CD8-positive, alpha-beta memory T cell (primary cell): ENCODE measurements at regions of chr5 and their contacts with region 1.

Region 1: DNA sequence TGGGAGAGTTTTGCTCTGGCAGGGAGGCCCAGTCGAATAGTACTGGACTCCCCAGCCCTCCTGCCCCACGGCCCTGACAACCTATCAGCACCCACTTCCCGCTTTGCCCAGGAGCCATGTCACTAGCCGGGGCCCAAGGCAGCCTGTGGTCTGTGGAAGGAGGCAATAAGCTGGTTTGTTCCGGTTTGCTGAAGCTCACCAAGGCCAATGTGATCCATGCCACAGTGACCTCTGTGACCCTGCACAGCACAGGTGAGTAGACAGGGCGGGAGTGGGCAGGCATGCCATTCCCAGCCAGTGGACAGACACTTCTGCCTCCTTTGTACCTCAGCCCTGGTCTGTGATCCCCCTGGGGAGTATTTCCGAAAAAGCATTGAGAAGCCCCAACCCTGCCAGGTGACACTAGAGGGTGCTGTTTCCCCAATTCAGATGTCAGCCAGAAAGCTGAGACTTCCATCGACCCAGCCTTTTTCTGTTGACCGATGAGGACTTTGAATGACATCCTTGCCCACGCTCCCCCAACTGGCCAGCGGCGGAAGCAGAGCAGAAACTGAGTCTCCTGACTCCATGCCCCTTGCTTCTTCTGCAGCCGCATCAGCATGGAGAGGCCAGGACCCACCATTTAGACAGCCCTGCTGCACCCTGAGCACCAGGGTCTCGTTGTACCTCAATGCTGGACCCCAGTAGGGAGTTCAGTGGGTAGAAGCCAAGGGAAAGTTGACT is 9.6 kb downstream of the PCYOX1L start:
- DNase-seq: peak; percentile 13 to 55 (median 22)
- H3K4me3 ChIP-seq: no peak overlapping the region
- H3K4me3 Mint-ChIP-seq: no peak overlapping the region
- H3K27ac ChIP-seq: no peak overlapping the region
- H3K27ac Mint-ChIP-seq: peak overlapping the region in 3 of 8 donors; percentile 21 to 38 (median 33)
- H3K4me1 ChIP-seq: peaks cover 4% of the 10 kb centered on the region
- H3K4me1 Mint-ChIP-seq: peaks cover 11 to 18% (median 16%) of the 10 kb centered on the region in 3 donors
- H3K27me3 ChIP-seq: no peaks in the 10 kb centered on the region
- H3K27me3 Mint-ChIP-seq: no peaks in the 10 kb centered on the region

Region 2: GRCh38 chr5:149099920-149100319 is 267.5 kb before region 1 on chr5:
- CTCF ChIA-PET with region 1: no interaction called
- POLR2A ChIA-PET with region 1: no interaction called
- DNase-seq: no peak
- H3K4me3 ChIP-seq: no peak overlapping the region
- H3K4me3 Mint-ChIP-seq: no peak overlapping the region
- H3K27ac ChIP-seq: no peak overlapping the region
- H3K27ac Mint-ChIP-seq: no peak overlapping the region
- H3K4me1 ChIP-seq: no peaks in the 10 kb centered on the region
- H3K4me1 Mint-ChIP-seq: no peaks in the 10 kb centered on the region
- H3K27me3 ChIP-seq: no peaks in the 10 kb centered on the region
- H3K27me3 Mint-ChIP-seq: peaks cover 10 to 14% of the 10 kb centered on the region in 2 donors

Region 3: GRCh38 chr5:149317281-149318048 is 49.9 kb before region 1 on chr5:
- CTCF ChIA-PET with region 1: interaction called, 221 read pairs
- POLR2A ChIA-PET with region 1: no interaction called
- DNase-seq: peak in 4 of 5 donors; percentile 13 to 52 (median 24)
- H3K4me3 ChIP-seq: no peak overlapping the region
- H3K4me3 Mint-ChIP-seq: no peak overlapping the region
- H3K27ac ChIP-seq: no peak overlapping the region
- H3K27ac Mint-ChIP-seq: no peak overlapping the region
- H3K4me1 ChIP-seq: peaks cover 3% of the 10 kb centered on the region
- H3K4me1 Mint-ChIP-seq: no peaks in the 10 kb centered on the region
- H3K27me3 ChIP-seq: no peaks in the 10 kb centered on the region
- H3K27me3 Mint-ChIP-seq: peaks cover 4 to 5% of the 10 kb centered on the region in 2 donors

Region 4: DNA sequence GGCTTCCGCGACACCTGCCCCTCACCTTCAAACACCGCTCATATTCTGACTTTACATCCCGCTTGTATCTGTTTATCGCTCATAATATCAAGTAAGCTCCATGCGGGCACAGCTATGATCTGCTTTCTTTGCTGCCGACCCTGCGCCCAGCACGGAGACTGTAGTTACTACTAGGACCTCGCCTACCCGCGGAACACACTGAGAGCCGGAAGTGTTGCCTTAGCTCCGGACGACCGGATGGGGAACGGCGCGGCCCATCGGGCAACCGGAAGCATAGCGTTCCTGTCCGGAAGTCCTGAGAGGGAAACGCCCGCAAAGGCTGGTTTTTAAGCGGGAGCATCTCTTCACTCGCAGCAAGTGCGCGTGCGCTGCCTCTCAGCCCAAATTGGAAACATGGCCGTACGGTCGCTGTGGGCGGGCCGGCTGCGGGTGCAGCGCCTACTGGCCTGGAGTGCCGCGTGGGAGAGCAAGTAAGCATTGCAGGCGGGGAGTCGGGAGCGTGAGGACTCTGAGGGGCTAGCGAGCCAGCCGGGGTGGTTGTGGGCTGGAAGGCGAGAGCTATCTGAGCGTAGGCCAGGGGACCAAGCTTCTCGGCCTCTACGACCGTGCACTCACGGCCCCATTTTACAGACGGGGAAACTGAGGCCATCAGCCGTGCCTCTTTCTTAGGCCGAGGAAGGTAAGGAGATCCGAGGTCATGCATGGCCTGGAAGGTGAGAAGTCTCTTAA is 22.1 kb before region 1 on chr5 and contains the start of gene GRPEL2:
- CTCF ChIA-PET with region 1: interaction called, 25 read pairs
- POLR2A ChIA-PET with region 1: no interaction called
- DNase-seq: peak; percentile 73 to 90 (median 81)
- H3K4me3 ChIP-seq: peak within 1 kb of the TSS; percentile 96
- H3K4me3 Mint-ChIP-seq: peak within 1 kb of the TSS; percentile 81 to 95 (median 95)
- H3K27ac ChIP-seq: peak within 1 kb of the TSS; percentile 78
- H3K27ac Mint-ChIP-seq: peak within 1 kb of the TSS; percentile 72 to 93 (median 90)
- H3K4me1 ChIP-seq: peaks cover 52% of the 10 kb centered on the region
- H3K4me1 Mint-ChIP-seq: peaks cover 49 to 62% (median 60%) of the 10 kb centered on the region in 3 donors
- H3K27me3 ChIP-seq: no peaks in the 10 kb centered on the region
- H3K27me3 Mint-ChIP-seq: no peaks in the 10 kb centered on the region
- total RNA-seq, gene GRPEL2: 33.4 to 36.5 TPM

Region 5: GRCh38 chr5:149352169-149352568 is 15.2 kb before region 1 on chr5:
- CTCF ChIA-PET with region 1: interaction called, 69 read pairs
- POLR2A ChIA-PET with region 1: interaction called, 4 read pairs
- DNase-seq: no peak
- H3K4me3 ChIP-seq: no peak overlapping the region
- H3K4me3 Mint-ChIP-seq: no peak overlapping the region
- H3K27ac ChIP-seq: no peak overlapping the region
- H3K27ac Mint-ChIP-seq: peak overlapping the region in 3 of 8 donors; percentile 14 to 37 (median 36)
- H3K4me1 ChIP-seq: peaks cover 58% of the 10 kb centered on the region
- H3K4me1 Mint-ChIP-seq: peaks cover 54 to 83% (median 80%) of the 10 kb centered on the region in 3 donors
- H3K27me3 ChIP-seq: no peaks in the 10 kb centered on the region
- H3K27me3 Mint-ChIP-seq: no peaks in the 10 kb centered on the region

Region 6: DNA sequence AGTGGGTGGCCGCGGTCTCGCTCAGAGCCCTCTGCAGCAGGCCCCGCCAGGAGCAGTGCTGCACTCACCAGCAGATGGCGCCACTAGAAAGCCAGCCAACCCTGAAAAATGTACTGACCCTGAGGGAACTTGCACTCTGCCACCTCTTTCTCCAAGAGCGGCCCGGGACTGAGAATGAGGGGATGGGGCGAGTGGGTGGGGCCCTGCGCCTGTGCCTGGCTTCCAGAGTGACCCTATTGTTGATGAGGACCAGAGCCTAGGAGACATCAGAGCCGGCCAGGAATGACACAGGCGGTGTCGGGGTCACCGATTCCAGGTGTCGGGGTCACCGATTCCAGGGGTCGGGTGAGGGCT is 14.6 kb after region 1 on chr5:
- CTCF ChIA-PET with region 1: interaction called, 25 read pairs
- POLR2A ChIA-PET with region 1: no interaction called
- DNase-seq: peak; percentile 39 to 74 (median 55)
- H3K4me3 ChIP-seq: no peak overlapping the region
- H3K4me3 Mint-ChIP-seq: no peak overlapping the region
- H3K27ac ChIP-seq: no peak overlapping the region
- H3K27ac Mint-ChIP-seq: peak overlapping the region in 1 of 8 donors; percentile 39
- H3K4me1 ChIP-seq: no peaks in the 10 kb centered on the region
- H3K4me1 Mint-ChIP-seq: peaks cover 0 to 6% (median 4%) of the 10 kb centered on the region in 3 donors
- H3K27me3 ChIP-seq: no peaks in the 10 kb centered on the region
- H3K27me3 Mint-ChIP-seq: peaks cover 9 to 18% of the 10 kb centered on the region in 2 donors

Region 7: DNA sequence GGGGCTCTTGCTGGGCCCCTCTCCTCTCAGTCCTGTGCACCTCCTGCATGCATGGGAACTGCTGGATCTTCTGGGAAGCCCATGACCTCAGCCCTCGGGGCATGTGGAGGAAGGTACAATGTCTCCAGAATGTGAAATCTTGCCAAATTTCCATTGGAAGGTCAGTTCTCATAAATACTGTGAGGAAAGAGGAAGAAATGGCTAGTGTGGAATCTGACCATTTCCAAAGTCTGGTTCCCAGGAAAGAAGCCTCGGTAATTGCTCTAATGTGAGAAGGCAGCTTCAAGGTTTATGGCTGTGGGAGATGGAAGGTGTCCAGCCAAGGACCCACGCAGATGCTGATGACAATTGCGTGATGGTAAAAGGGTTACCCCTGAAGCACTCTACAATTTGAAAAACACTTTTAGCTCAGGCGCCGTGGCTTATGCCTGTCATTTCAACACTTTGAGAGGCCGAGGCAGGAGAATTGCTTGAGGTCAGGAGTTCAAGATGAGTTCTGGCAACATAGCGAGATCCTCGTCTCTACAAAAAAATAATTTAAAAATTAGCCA is 19.7 kb after region 1 on chr5:
- CTCF ChIA-PET with region 1: interaction called, 25 read pairs
- POLR2A ChIA-PET with region 1: no interaction called
- DNase-seq: no peak
- H3K4me3 ChIP-seq: no peak overlapping the region
- H3K4me3 Mint-ChIP-seq: no peak overlapping the region
- H3K27ac ChIP-seq: no peak overlapping the region
- H3K27ac Mint-ChIP-seq: no peak overlapping the region
- H3K4me1 ChIP-seq: no peaks in the 10 kb centered on the region
- H3K4me1 Mint-ChIP-seq: no peaks in the 10 kb centered on the region
- H3K27me3 ChIP-seq: no peaks in the 10 kb centered on the region
- H3K27me3 Mint-ChIP-seq: peaks cover 5 to 6% of the 10 kb centered on the region in 2 donors